MCF 10A (cell line): ENCODE measurements at regions of chrX and their contacts with region 1.

Region 1: DNA sequence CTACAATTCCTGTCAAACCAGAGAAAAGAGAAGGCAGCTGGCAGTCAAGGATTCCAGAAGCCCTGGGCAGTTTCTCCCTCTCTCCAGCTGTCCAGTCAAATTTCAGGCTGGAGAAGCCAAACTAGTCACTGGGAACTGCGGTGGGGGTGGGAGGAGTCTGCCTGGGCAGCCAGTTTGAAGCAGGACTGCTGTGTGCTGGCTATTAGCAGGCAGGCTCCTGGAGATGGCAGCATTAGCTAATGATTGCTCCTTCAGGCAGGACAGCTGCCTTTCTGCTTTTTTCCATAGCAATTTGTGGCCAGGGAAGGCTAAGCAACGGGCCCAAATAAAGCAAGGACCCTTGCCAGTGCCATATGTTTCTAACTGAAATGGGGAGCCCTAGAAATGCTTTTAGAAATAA is 44.7 kb upstream of the FGF13 start:
- DNase-seq: peak; percentile 62
- H3K4me3 Mint-ChIP-seq: no peak overlapping the region
- H3K27ac Mint-ChIP-seq: no peak overlapping the region
- H3K4me1 Mint-ChIP-seq: no peaks in the 10 kb centered on the region
- H3K27me3 Mint-ChIP-seq: no peaks in the 10 kb centered on the region
- CTCF ChIP-seq: peak; percentile 29

Region 2: DNA sequence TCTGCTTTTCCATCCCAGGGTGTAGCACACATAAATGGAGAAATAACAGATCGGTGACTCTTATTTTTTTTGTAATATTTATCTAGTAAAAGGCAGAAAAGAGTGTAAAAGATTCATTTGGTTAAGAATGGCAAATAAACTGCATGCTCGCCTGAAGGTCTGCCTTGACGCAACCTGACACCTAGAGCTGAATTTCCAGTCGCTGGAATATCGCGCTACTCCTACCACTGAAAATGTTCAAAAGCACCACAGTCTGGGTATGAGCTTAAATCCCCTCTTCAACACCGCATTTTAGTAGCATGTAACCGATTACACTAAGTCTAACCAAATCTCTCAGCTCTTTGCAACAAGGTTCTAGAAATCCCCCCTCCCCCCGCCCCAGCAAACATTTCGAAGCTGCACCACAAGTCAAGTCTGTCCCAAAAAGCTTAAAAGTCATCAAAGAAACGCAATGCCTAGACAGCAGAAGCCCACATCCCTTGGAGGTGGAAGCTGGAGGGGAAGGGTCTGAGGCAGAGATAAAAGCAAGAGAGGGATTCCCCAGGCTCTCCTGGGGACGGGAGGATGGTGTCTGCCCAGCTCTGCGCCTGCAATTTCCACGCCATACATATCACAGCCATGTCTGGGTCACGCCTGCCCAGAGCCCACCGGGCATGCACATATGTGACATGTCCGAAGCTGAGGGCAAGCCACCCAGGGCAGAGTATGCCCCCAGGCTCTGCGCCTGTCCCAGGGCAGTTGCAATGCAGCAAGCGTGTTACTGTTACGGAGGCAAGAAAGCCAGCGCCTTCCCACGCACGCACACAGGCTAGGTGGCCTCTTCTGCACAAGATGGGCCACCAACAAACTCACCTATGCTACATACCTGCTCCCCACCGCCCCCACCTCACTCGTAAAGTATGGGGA is 46.1 kb before region 1 on chrX:
- CTCF ChIA-PET with region 1: no interaction called
- POLR2A ChIA-PET with region 1: no interaction called
- intact Hi-C with region 1: no loop called
- DNase-seq: no peak
- H3K4me3 Mint-ChIP-seq: no peak overlapping the region
- H3K27ac Mint-ChIP-seq: no peak overlapping the region
- H3K4me1 Mint-ChIP-seq: no peaks in the 10 kb centered on the region
- H3K27me3 Mint-ChIP-seq: peaks cover 31% of the 10 kb centered on the region
- CTCF ChIP-seq: no peak

Region 3: GRCh38 chrX:139172731-139173130 is 416.5 kb after region 1 on chrX:
- CTCF ChIA-PET with region 1: no interaction called
- POLR2A ChIA-PET with region 1: no interaction called
- intact Hi-C with region 1: no loop called
- DNase-seq: no peak
- H3K4me3 Mint-ChIP-seq: no peak overlapping the region
- H3K27ac Mint-ChIP-seq: no peak overlapping the region
- H3K4me1 Mint-ChIP-seq: no peaks in the 10 kb centered on the region
- H3K27me3 Mint-ChIP-seq: no peaks in the 10 kb centered on the region
- CTCF ChIP-seq: no peak

Region 4: GRCh38 chrX:139971394-139971749 is 1215.1 kb after region 1 on chrX:
- CTCF ChIA-PET with region 1: interaction called, 5 read pairs
- POLR2A ChIA-PET with region 1: no interaction called
- intact Hi-C with region 1: loop called (anchors 5 kb)
- DNase-seq: no peak
- H3K4me3 Mint-ChIP-seq: no peak overlapping the region
- H3K27ac Mint-ChIP-seq: no peak overlapping the region
- H3K4me1 Mint-ChIP-seq: no peaks in the 10 kb centered on the region
- H3K27me3 Mint-ChIP-seq: no peaks in the 10 kb centered on the region
- CTCF ChIP-seq: no peak